Dorsolateral prefrontal cortex (tissue), 120 donors: ENCODE measurements at regions of chr19 and their contacts with region 1.

Region 1: GRCh38 chr19:5340637-5341447 is at the start of gene PTPRS:
- DNase-seq: peak; percentile 68 to 95 (median 86)
- H3K4me3 ChIP-seq: peak within 1 kb of the TSS; percentile 57 to 89 (median 77)
- H3K27ac ChIP-seq: peak within 1 kb of the TSS in 55 of 59 donors; percentile 49 to 93 (median 80)
- H3K27me3 ChIP-seq: no peaks in the 10 kb centered on the region
- CTCF ChIP-seq: no peak
- total RNA-seq, gene PTPRS: 163 to 282 (median 231) TPM

Region 2: GRCh38 chr19:5048091-5048726 is 292.6 kb before region 1 on chr19:
- intact Hi-C with region 1: loop called (anchors 5 to 10 kb)
- DNase-seq: peak; percentile 75 to 90 (median 82)
- H3K4me3 ChIP-seq: peak overlapping the region in 8 of 59 donors; percentile 2 to 22 (median 9)
- H3K27ac ChIP-seq: peak overlapping the region in 53 of 59 donors; percentile 7 to 90 (median 70)
- H3K27me3 ChIP-seq: no peaks in the 10 kb centered on the region
- CTCF ChIP-seq: peak; percentile 85 to 99 (median 97)

Region 3: GRCh38 chr19:5057861-5058260 is 283.0 kb before region 1 on chr19:
- intact Hi-C with region 1: loop called in 1 of 2 experiments (anchors 10 kb)
- DNase-seq: peak in 1 of 10 donors; percentile 60
- H3K4me3 ChIP-seq: no peak overlapping the region
- H3K27ac ChIP-seq: peak overlapping the region in 20 of 59 donors; percentile 8 to 88 (median 70)
- H3K27me3 ChIP-seq: no peaks in the 10 kb centered on the region
- CTCF ChIP-seq: no peak

Region 4: GRCh38 chr19:5225486-5226345 is 115.1 kb before region 1 on chr19:
- intact Hi-C with region 1: loop called (anchors 5 kb)
- DNase-seq: no peak
- H3K4me3 ChIP-seq: no peak overlapping the region
- H3K27ac ChIP-seq: no peak overlapping the region
- H3K27me3 ChIP-seq: no peaks in the 10 kb centered on the region
- CTCF ChIP-seq: peak in 54 of 56 donors; percentile 15 to 69 (median 54)

Region 5: GRCh38 chr19:5250127-5250659 is 90.6 kb before region 1 on chr19:
- intact Hi-C with region 1: loop called in 1 of 2 experiments (anchors 2 kb)
- DNase-seq: peak; percentile 62 to 79 (median 78)
- H3K4me3 ChIP-seq: no peak overlapping the region
- H3K27ac ChIP-seq: peak overlapping the region in 5 of 59 donors; percentile 5 to 24 (median 18)
- H3K27me3 ChIP-seq: no peaks in the 10 kb centered on the region
- CTCF ChIP-seq: no peak

Region 6: DNA sequence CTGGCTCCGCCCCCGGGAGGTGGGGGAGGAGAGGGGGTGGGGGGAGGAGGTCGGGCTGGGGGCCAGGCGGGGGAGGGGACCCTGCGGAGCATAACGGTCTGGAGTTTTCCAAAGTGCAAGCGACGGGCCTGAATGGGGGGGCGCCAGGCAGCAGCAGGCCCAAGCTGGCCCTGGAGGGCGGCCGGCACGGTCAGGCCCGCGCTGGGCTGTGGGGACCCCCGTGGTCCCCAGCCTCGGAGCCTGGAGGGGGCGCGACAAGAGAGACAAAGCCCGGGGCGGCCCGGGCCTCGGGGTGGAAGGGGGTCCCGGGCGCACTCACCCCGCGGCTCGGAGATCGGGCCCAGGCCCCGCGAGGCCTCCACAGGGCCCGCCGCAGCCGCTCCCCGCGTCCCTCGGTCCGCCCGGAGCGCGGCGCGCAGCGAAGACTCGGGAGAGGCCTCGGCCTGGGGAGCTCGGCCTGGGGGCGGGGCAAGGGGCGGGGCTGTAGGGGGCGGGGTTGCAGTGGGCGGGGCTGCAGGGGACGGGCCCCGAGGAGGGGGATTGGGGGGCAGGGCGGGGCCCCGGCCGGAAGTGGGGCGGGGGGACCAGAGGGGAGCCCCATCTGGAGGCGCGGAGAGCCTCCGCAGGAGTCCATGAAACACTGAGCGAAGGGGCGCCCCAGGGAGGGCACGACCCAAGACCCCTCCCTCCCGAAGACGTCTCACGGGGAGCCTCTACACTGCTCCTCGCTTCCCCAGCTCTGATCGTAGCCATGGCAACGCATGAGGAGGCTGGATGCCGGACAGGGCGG is 47.8 kb before region 1 on chr19:
- intact Hi-C with region 1: loop called (anchors 1 to 5 kb)
- DNase-seq: peak; percentile 52 to 79 (median 62)
- H3K4me3 ChIP-seq: peak overlapping the region; percentile 61 to 92 (median 82)
- H3K27ac ChIP-seq: peak overlapping the region; percentile 58 to 99 (median 93)
- H3K27me3 ChIP-seq: no peaks in the 10 kb centered on the region
- CTCF ChIP-seq: peak in 8 of 56 donors; percentile 4 to 16 (median 8)

Region 7: GRCh38 chr19:5308471-5309437 is 32.1 kb before region 1 on chr19:
- intact Hi-C with region 1: loop called in 1 of 2 experiments (anchors 1 kb)
- DNase-seq: peak; percentile 61 to 87 (median 78)
- H3K4me3 ChIP-seq: peak overlapping the region in 56 of 59 donors; percentile 3 to 62 (median 42)
- H3K27ac ChIP-seq: peak overlapping the region; percentile 10 to 96 (median 90)
- H3K27me3 ChIP-seq: no peaks in the 10 kb centered on the region
- CTCF ChIP-seq: no peak

Region 8: GRCh38 chr19:5642204-5642603 is 301.4 kb after region 1 on chr19:
- intact Hi-C with region 1: no loop called
- DNase-seq: no peak
- H3K4me3 ChIP-seq: no peak overlapping the region
- H3K27ac ChIP-seq: no peak overlapping the region
- H3K27me3 ChIP-seq: no peaks in the 10 kb centered on the region
- CTCF ChIP-seq: no peak